ENCODE measurements at regions of chrX and their contacts with region 1.

Region 1: GRCh38 chrX:38817004-38817703 is 15.9 kb downstream of the MID1IP1 start:
- DNase-seq: peak; percentile 72
- H3K4me3 Mint-ChIP-seq: no peak overlapping the region
- H3K27ac Mint-ChIP-seq: no peak overlapping the region
- H3K4me1 Mint-ChIP-seq: peaks cover 9% of the 10 kb centered on the region
- H3K27me3 Mint-ChIP-seq: no peaks in the 10 kb centered on the region

Region 2: DNA sequence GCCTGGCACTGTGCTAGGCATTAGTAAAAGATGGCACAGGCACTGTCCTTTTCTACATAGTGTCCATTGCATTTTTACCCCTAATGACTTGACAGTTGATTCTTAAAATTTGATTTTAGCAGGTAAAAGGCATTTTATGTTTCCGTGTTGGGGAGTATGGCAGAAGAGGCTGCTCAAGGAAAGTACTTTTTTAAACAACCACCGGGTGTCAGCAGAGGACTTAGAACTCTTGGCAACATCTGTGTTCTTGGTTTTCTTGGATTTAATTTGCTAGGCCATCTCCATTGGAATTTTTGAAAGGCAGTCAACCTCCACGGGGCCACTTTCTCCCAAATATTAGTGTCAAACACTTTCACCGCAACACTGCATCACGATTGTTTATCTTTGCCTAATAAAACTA is 152.9 kb before region 1 on chrX:
- intact Hi-C with region 1: no loop called
- DNase-seq: peak; percentile 57
- H3K4me3 Mint-ChIP-seq: no peak overlapping the region
- H3K27ac Mint-ChIP-seq: no peak overlapping the region
- H3K4me1 Mint-ChIP-seq: no peaks in the 10 kb centered on the region
- H3K27me3 Mint-ChIP-seq: peaks cover 3% of the 10 kb centered on the region

Region 3: DNA sequence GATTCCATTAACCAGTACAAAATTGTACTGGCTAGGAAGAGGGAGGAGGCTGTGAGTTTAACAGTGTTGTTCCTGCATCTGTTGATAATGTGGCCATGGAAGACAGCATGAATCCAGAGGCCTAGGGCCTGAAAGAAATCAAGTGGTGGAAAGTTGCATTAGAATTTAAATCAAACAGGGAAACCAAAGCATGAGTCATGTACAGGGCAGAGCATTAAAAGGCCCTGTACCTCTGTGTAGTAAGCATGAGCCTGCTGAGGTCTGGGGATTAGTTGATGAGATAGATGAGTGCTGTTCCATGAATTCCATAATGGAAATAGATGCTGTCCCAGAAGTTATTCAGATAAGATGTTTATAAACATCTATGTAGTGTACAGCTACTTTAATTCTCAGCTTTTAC is 42.4 kb after region 1 on chrX:
- intact Hi-C with region 1: loop called (anchors 5 kb)
- DNase-seq: no peak
- H3K4me3 Mint-ChIP-seq: no peak overlapping the region
- H3K27ac Mint-ChIP-seq: no peak overlapping the region
- H3K4me1 Mint-ChIP-seq: peaks cover 4% of the 10 kb centered on the region
- H3K27me3 Mint-ChIP-seq: no peaks in the 10 kb centered on the region

Region 4: GRCh38 chrX:39125834-39126233 is 308.7 kb after region 1 on chrX:
- intact Hi-C with region 1: no loop called
- DNase-seq: no peak
- H3K4me3 Mint-ChIP-seq: no peak overlapping the region
- H3K27ac Mint-ChIP-seq: no peak overlapping the region
- H3K4me1 Mint-ChIP-seq: no peaks in the 10 kb centered on the region
- H3K27me3 Mint-ChIP-seq: no peaks in the 10 kb centered on the region

Measured in activated CD4-positive, alpha-beta T cell treated with anti-CD3 and anti-CD28 coated beads, Interleukin-2, amount 10 ng/mL, durations not matched to agents 24 days and 14 days (primary cell).